B cell (primary cell): ENCODE measurements at regions of chr17 and their contacts with region 1.

Region 1: DNA sequence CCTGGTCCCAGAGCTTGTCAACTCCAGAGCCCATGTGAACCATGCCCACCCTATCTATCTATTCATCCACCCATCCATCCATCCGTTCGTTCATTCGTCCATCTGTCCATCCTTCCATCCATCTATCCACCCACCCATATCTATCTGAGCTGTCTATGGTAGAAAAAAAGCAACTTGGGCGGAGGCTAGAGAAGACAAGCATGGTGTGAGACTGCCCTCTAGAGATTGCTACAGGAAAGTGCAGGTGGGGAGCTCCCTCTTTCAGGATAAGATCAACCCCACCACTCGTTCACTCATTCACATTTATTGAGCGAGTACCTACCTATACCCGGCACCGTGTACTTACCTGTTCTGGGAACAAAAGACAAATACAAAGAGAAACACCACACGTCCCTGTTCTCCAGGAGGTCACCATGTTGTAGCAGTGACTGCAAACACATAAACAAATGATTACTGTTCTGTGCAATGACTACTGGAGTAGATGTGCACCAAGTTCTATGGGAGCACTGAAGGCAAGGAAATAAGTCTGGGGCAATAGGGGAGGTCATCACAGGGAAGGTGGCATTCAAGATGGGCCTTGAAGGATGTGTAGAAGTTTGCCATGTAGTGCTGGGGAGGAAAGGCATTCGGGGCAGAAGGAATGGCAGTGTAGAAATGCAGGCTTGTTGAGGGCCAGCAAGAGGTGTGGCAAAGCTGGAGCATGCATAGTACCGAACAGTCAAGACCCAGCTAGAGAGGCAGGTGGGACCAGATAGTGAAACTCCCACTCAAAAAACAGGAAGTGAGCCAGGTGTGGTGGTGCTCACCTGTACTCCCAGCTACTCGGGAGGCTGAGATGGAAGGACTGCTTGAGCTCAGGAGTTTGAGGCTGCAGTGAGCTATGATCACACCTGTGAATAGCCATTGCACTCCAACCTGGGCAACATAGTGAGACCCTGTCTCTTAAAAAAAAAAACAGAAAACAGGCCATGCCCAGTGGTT is 13.4 kb upstream of the ATP5MC1 start:
- DNase-seq: peak; percentile 82
- ATAC-seq: peak; percentile 93
- H3K4me3 ChIP-seq: no peak overlapping the region
- H3K4me3 Mint-ChIP-seq: no peak overlapping the region
- H3K27ac ChIP-seq: no peak overlapping the region
- H3K27ac Mint-ChIP-seq: no peak overlapping the region
- H3K4me1 ChIP-seq: peaks cover 0 to 4% of the 10 kb centered on the region in 2 donors
- H3K4me1 Mint-ChIP-seq: no peaks in the 10 kb centered on the region
- H3K27me3 ChIP-seq: peaks cover 0 to 3% (median 0%) of the 10 kb centered on the region in 4 experiments
- H3K27me3 Mint-ChIP-seq: peaks cover 7% of the 10 kb centered on the region
- CTCF ChIP-seq: peak; percentile 95

Region 2: DNA sequence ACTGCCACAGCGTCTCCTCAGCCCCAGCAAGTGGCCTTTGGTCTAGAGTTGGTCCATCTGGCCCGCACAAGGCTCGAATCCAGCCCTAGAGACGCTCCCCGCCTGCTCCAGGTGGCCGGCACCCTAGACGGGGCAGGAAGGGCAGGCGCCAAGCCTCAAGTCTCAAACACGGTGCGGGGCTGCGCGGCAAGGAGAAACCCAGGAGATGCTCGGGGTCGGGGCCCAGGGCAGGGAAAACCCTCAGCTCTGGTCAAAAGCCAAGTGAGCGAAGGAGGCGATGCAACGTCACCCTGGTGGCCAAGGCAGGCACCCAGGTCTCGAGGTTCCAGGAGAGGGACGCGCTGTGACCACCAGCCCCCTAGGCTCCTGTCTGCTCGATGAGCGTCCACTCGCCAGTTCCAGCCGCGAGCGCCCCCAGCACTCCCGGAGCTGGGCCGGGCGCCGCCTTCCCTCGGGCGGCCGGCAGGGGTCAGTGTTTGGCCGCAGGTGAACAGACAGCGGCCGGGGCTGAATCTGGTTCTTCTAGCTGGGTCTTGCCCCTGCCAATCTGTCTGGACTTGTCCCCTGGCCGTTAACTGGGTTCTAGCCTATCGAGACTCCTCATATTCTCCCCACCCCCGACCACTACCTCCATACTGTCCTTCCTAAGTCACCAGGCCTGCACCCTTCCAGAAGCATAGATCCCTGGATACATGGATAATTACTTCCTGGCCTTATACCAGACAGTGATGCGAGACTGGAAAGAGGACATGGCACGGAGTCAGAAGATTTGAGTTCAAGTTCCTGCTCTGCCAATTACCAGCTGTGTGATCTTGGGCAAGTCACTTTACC is 200.9 kb before region 1 on chr17:
- CTCF ChIA-PET with region 1: interaction called, 119 read pairs
- POLR2A ChIA-PET with region 1: no interaction called
- intact Hi-C with region 1: loop called (anchors 1 kb)
- DNase-seq: peak; percentile 78
- ATAC-seq: peak; percentile 81
- H3K4me3 ChIP-seq: no peak overlapping the region
- H3K4me3 Mint-ChIP-seq: no peak overlapping the region
- H3K27ac ChIP-seq: no peak overlapping the region
- H3K27ac Mint-ChIP-seq: no peak overlapping the region
- H3K4me1 ChIP-seq: peaks cover 0 to 9% of the 10 kb centered on the region in 2 donors
- H3K4me1 Mint-ChIP-seq: peaks cover 2% of the 10 kb centered on the region
- H3K27me3 ChIP-seq: peaks cover 0 to 41% (median 18%) of the 10 kb centered on the region in 4 experiments
- H3K27me3 Mint-ChIP-seq: peaks cover 49% of the 10 kb centered on the region
- CTCF ChIP-seq: peak; percentile 97

Region 3: GRCh38 chr17:48804925-48805411 is 74.2 kb before region 1 on chr17:
- CTCF ChIA-PET with region 1: interaction called, 730 read pairs
- POLR2A ChIA-PET with region 1: interaction called, 6 read pairs
- intact Hi-C with region 1: loop called (anchors 1 kb)
- DNase-seq: peak; percentile 72
- ATAC-seq: peak; percentile 93
- H3K4me3 ChIP-seq: no peak overlapping the region
- H3K4me3 Mint-ChIP-seq: no peak overlapping the region
- H3K27ac ChIP-seq: no peak overlapping the region
- H3K27ac Mint-ChIP-seq: no peak overlapping the region
- H3K4me1 ChIP-seq: peaks cover 2 to 3% of the 10 kb centered on the region in 2 donors
- H3K4me1 Mint-ChIP-seq: no peaks in the 10 kb centered on the region
- H3K27me3 ChIP-seq: peaks cover 0 to 9% (median 4%) of the 10 kb centered on the region in 4 experiments
- H3K27me3 Mint-ChIP-seq: peaks cover 14% of the 10 kb centered on the region
- CTCF ChIP-seq: peak; percentile 95

Region 4: GRCh38 chr17:48836004-48836403 is 43.2 kb before region 1 on chr17:
- CTCF ChIA-PET with region 1: interaction called, 30 read pairs
- POLR2A ChIA-PET with region 1: no interaction called
- intact Hi-C with region 1: no loop called
- DNase-seq: no peak
- ATAC-seq: no peak
- H3K4me3 ChIP-seq: no peak overlapping the region
- H3K4me3 Mint-ChIP-seq: no peak overlapping the region
- H3K27ac ChIP-seq: no peak overlapping the region
- H3K27ac Mint-ChIP-seq: no peak overlapping the region
- H3K4me1 ChIP-seq: peaks cover 64 to 66% of the 10 kb centered on the region in 2 donors
- H3K4me1 Mint-ChIP-seq: peaks cover 71% of the 10 kb centered on the region
- H3K27me3 ChIP-seq: no peaks in the 10 kb centered on the region
- H3K27me3 Mint-ChIP-seq: no peaks in the 10 kb centered on the region
- CTCF ChIP-seq: no peak

Region 5: GRCh38 chr17:48860034-48860433 is 19.2 kb before region 1 on chr17:
- CTCF ChIA-PET with region 1: interaction called, 10 read pairs
- POLR2A ChIA-PET with region 1: no interaction called
- intact Hi-C with region 1: no loop called
- DNase-seq: no peak
- ATAC-seq: no peak
- H3K4me3 ChIP-seq: no peak overlapping the region
- H3K4me3 Mint-ChIP-seq: no peak overlapping the region
- H3K27ac ChIP-seq: no peak overlapping the region
- H3K27ac Mint-ChIP-seq: no peak overlapping the region
- H3K4me1 ChIP-seq: no peaks in the 10 kb centered on the region
- H3K4me1 Mint-ChIP-seq: no peaks in the 10 kb centered on the region
- H3K27me3 ChIP-seq: no peaks in the 10 kb centered on the region
- H3K27me3 Mint-ChIP-seq: no peaks in the 10 kb centered on the region
- CTCF ChIP-seq: peak; percentile 59

Region 6: GRCh38 chr17:48908047-48908843 is 29.0 kb after region 1 on chr17 and contains the start of gene UBE2Z:
- CTCF ChIA-PET with region 1: interaction called, 10 read pairs
- POLR2A ChIA-PET with region 1: no interaction called
- intact Hi-C with region 1: no loop called
- DNase-seq: peak; percentile 96
- ATAC-seq: peak; percentile 90
- H3K4me3 ChIP-seq: peak within 1 kb of the TSS; percentile 36 to 79 (median 72)
- H3K4me3 Mint-ChIP-seq: peak within 1 kb of the TSS; percentile 95
- H3K27ac ChIP-seq: peak within 1 kb of the TSS; percentile 78 to 82
- H3K27ac Mint-ChIP-seq: peak within 1 kb of the TSS; percentile 99
- H3K4me1 ChIP-seq: peaks cover 26 to 30% of the 10 kb centered on the region in 2 donors
- H3K4me1 Mint-ChIP-seq: peaks cover 45% of the 10 kb centered on the region
- H3K27me3 ChIP-seq: no peaks in the 10 kb centered on the region
- H3K27me3 Mint-ChIP-seq: no peaks in the 10 kb centered on the region
- CTCF ChIP-seq: no peak
- total RNA-seq, gene UBE2Z: 121 and 122 TPM in 2 replicates

Region 7: DNA sequence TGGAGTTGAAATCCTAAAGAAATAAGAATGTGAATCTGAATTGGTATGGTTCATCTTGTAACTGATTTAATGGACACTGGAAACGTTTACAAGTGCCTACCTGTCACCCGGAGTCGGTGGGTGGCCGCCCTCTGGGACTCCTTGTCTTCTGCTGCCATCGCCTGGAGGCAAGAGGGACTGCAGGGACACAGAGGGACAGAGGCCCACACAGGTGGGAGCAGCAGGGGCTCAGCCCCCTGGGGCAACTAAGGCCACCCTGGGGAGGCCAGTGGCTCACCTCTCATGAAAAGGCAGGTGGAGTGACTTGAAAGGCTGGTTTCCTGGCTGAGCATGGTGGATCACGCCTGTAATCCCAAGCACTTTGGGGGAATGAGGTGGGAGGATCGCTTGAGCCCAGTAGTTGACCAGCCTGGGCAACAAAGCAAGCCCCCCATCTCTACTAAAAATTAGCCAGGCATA is 1418.2 kb after region 1 on chr17:
- CTCF ChIA-PET with region 1: no interaction called
- POLR2A ChIA-PET with region 1: no interaction called
- intact Hi-C with region 1: no loop called
- DNase-seq: peak; percentile 81
- ATAC-seq: peak; percentile 99
- H3K4me3 ChIP-seq: no peak overlapping the region
- H3K4me3 Mint-ChIP-seq: no peak overlapping the region
- H3K27ac ChIP-seq: no peak overlapping the region
- H3K27ac Mint-ChIP-seq: peak overlapping the region; percentile 43
- H3K4me1 ChIP-seq: no peaks in the 10 kb centered on the region
- H3K4me1 Mint-ChIP-seq: no peaks in the 10 kb centered on the region
- H3K27me3 ChIP-seq: no peaks in the 10 kb centered on the region
- H3K27me3 Mint-ChIP-seq: peaks cover 20% of the 10 kb centered on the region
- CTCF ChIP-seq: peak; percentile 92